Breast epithelium (tissue), 4 donors: ENCODE measurements at regions of chr3 and their contacts with region 1.

Region 1: GRCh38 chr3:180979961-180980360 is 9.6 kb downstream of the DNAJC19 start:
- DNase-seq: no peak
- H3K4me3 ChIP-seq: no peak overlapping the region
- H3K27ac ChIP-seq: no peak overlapping the region
- H3K4me1 ChIP-seq: no peaks in the 10 kb centered on the region
- H3K27me3 ChIP-seq: no peaks in the 10 kb centered on the region
- CTCF ChIP-seq: no peak
- POLR2A ChIP-seq: no peak

Region 2: GRCh38 chr3:180909369-180910127 is 70.4 kb before region 1 on chr3:
- intact Hi-C with region 1: loop called (anchors 2 kb)
- DNase-seq: no peak
- H3K4me3 ChIP-seq: no peak overlapping the region
- H3K27ac ChIP-seq: no peak overlapping the region
- H3K4me1 ChIP-seq: peaks cover 0 to 4% of the 10 kb centered on the region in 2 donors
- H3K27me3 ChIP-seq: no peaks in the 10 kb centered on the region
- CTCF ChIP-seq: no peak
- POLR2A ChIP-seq: no peak

Region 3: GRCh38 chr3:181017690-181018089 is 37.7 kb after region 1 on chr3:
- intact Hi-C with region 1: no loop called
- DNase-seq: no peak
- H3K4me3 ChIP-seq: no peak overlapping the region
- H3K27ac ChIP-seq: no peak overlapping the region
- H3K4me1 ChIP-seq: no peaks in the 10 kb centered on the region
- H3K27me3 ChIP-seq: no peaks in the 10 kb centered on the region
- CTCF ChIP-seq: no peak
- POLR2A ChIP-seq: no peak